ENCODE measurements at regions of chr11 and their contacts with region 1.

Region 1: GRCh38 chr11:57800444-57801182 is 39.0 kb downstream of the CTNND1 start:
- DNase-seq: peak; percentile 48
- H3K4me3 Mint-ChIP-seq: peak overlapping the region; percentile 17
- H3K27ac Mint-ChIP-seq: peak overlapping the region; percentile 54
- H3K4me1 Mint-ChIP-seq: peaks cover 35% of the 10 kb centered on the region
- H3K27me3 Mint-ChIP-seq: no peaks in the 10 kb centered on the region

Region 2: DNA sequence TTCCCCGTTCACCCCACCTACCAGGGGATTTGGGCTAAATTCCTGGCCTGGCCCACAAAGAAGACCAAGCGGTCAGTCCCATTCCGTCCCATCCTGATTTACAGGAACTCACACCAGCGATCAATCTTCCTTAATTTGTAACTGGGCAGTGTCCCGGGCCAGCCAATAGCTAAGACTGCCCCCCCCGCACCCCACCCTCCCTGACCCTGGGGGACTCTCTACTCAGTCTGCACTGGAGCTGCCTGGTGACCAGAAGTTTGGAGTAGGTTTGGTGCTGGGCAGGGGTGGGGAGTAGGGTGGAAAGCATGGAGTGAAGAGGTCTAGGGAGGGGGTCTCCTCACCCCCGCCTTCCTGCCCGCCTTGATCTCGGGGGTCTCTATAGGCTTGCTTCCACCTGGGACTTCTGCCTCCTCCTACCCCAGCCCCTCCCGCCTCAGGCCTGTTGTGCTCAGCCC is 203.1 kb before region 1 on chr11 and contains the start of gene SERPING1:
- CTCF ChIA-PET with region 1: no interaction called
- POLR2A ChIA-PET with region 1: no interaction called
- DNase-seq: no peak
- H3K4me3 Mint-ChIP-seq: no peak within 1 kb of the TSS
- H3K27ac Mint-ChIP-seq: no peak within 1 kb of the TSS
- H3K4me1 Mint-ChIP-seq: peaks cover 1% of the 10 kb centered on the region
- H3K27me3 Mint-ChIP-seq: peaks cover 40% of the 10 kb centered on the region
- total RNA-seq, gene SERPING1: 0.23 TPM in 1 of 2 experiments, not detected in the other

Region 3: DNA sequence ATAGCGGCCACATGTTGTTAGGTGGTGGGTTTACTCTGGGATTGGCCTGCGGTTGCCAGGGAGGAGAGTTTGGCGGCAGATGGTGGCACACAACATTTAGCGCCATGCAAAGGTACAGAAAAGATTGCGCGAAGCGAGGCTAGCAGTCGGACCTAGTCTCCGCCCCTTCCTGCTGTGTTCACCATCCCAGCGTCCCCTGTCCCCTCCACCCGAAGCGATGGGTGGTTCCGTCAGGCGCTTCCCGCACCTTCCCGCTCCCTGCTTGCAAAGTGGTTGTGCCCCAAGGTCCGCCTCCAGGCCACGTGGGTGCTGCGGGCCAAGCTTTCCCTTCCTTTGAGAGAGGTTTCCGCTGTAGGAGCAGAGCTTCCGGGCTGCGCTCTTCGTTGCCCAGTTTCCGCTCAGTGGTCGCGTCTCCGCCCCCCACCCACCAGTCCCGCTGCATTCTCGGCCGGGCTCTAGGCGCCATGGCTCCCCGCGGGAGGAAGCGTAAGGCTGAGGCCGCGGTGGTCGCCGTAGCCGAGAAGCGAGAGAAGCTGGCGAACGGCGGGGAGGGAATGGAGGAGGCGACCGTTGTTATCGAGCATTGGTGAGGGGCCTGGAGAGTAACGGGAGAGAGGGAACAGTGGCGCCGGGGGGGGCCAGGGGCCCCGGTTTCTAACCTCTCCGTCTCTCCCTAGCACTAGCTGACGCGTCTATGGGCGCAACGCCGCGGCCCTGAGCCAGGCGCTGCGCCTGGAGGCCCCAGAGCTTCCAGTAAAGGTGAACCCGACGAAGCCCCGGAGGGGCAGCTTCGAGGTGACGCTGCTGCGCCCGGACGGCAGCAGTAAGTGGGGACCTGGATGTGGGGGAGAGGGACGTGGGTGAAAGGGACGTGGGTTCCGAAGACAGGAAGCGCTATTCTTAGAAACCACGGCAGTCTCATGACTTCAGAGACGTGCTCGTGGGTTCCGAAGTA is 59.2 kb before region 1 on chr11 and contains the start of gene SELENOH:
- CTCF ChIA-PET with region 1: interaction called, 13 read pairs
- POLR2A ChIA-PET with region 1: interaction called, 3 read pairs
- DNase-seq: peak; percentile 97
- H3K4me3 Mint-ChIP-seq: peak within 1 kb of the TSS; percentile 98
- H3K27ac Mint-ChIP-seq: peak within 1 kb of the TSS; percentile 94
- H3K4me1 Mint-ChIP-seq: peaks cover 41% of the 10 kb centered on the region
- H3K27me3 Mint-ChIP-seq: no peaks in the 10 kb centered on the region
- total RNA-seq, gene SELENOH: 129 to 181 TPM

Region 4: GRCh38 chr11:57842873-57843272 is 42.3 kb after region 1 on chr11:
- CTCF ChIA-PET with region 1: no interaction called
- POLR2A ChIA-PET with region 1: no interaction called
- DNase-seq: no peak
- H3K4me3 Mint-ChIP-seq: no peak overlapping the region
- H3K27ac Mint-ChIP-seq: no peak overlapping the region
- H3K4me1 Mint-ChIP-seq: no peaks in the 10 kb centered on the region
- H3K27me3 Mint-ChIP-seq: no peaks in the 10 kb centered on the region

Region 5: DNA sequence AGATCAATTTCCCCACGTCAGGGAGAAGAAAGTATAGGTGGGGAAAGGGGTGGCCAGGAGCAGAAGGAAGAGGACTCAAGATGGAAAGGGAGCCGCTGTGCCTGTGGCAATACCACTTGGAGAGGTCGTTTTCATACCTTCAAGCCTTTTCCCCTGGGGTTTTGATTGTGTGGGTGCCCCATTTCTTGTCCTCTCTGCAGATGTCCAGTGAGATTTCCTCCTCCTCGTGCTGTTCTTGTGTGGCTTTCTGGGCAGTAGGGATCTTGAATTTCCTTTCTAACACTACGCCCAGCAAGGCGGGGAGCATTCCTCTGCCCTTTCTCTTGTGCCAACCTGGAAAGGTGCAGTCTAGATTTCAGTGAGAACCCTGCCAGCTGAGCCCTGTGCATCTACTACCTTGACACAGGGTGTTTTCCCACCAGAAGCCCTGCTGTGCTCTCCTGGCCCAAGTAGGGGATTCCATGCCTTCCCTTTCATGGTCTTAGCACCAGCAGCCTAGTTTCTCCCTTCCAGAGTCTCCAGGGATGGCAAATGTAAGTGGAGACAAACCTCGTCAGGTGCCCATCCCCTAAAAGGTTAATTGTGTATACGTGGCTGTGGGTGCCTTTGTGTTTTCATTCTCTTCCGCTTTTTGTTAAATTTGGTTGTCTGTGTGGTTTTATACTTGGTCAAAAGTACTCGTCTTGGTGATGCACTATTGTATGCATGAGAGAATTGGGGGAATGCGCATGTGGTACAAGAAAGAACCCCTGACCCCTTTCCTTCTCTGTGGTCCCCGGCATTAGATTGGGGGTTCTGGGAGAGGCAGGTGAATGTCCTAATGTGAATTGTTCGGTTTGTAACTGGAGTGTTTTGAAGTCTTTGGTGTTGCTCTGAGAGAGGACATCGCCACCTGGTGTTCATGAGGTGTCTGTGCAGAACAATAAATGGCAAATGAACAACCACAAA is 1483.5 kb after region 1 on chr11:
- CTCF ChIA-PET with region 1: no interaction called
- POLR2A ChIA-PET with region 1: no interaction called
- DNase-seq: peak; percentile 65
- H3K4me3 Mint-ChIP-seq: peak overlapping the region; percentile 49
- H3K27ac Mint-ChIP-seq: peak overlapping the region; percentile 66
- H3K4me1 Mint-ChIP-seq: peaks cover 18% of the 10 kb centered on the region
- H3K27me3 Mint-ChIP-seq: peaks cover 19% of the 10 kb centered on the region